ENCODE measurements at regions of chr17 and their contacts with region 1.

Region 1: DNA sequence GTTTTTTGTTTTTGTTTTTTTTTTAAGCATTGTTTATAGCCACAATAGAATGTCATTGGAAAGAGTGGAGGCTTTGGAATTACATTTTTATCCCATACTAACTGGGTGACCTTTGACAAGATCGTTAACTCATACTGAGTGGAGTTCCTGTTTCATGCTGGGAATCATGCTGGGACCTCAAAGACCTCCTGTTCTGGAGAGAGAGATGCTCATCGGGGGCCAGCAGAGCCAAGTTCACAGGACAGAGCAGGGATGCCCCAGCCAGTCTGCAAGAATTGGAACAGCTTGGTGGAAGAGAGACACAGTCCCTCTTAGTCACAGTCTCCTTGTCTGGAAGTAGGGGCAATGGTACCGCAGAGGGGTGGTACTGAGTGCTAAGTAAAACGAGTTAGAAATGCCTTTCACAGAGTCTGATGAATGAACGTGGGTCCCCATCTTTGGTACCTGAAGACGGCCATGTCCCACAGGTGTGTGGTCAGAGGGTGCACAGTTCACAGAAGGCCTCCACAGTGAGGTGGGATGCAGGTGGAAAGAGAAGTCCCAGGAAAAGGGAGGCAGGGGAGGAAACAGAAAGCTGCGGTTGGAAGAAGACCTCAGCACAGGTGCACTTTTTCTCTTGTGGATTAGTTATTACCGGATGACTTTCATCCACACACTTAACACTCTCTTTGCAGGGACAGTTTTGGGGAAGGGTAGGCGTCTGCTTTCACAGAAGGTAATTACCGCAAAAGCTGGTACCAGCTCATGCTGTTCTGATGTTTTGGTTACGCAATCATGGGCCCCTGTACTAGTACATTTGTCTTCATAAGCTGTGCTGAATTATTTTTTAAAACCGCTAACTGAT is 147.8 kb downstream of the PRKCA start:
- DNase-seq: no peak
- H3K4me3 ChIP-seq: no peak overlapping the region
- H3K27ac ChIP-seq: peak overlapping the region in 1 of 2 experiments; percentile 24; a peak in 2 of 4 replicates
- H3K4me1 ChIP-seq: peaks cover 14 to 28% of the 10 kb centered on the region in 2 experiments; a peak in 3 of 4 replicates
- H3K27me3 ChIP-seq: no peaks in the 10 kb centered on the region
- CTCF ChIP-seq: no peak
- EP300 ChIP-seq: no peak
- RAD21 ChIP-seq: no peak

Region 2: DNA sequence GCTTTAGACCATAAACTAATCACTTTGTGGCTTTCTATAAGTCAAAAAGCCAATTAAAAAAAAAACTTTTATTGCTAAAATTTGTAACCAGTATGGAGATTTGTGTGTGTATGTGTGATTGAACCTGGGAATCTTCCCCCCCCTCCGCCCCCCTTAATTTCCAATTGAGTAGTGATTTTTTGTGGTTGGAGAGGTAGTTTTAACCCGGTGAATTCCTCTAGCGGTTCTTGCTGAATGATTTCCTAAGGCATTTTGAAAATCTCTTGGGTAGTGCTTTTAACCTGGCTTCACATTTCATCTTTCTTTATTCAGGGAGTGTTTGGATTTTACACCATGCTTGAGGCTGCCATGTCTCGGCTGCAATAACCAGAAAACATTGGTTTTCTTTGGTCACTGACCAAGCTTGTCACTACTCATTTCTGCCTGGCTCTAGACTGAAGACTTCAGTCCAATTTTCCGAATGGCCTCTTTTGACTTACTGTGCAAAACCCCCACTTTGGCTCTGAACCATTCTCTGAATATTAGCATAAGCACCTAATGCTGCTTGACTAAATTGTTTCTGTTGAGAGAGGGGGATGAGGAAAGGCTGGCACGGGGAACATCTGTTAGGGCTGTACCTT is 112.3 kb before region 1 on chr17:
- CTCF ChIA-PET with region 1: no interaction called
- POLR2A ChIA-PET with region 1: no interaction called
- DNase-seq: no peak
- H3K4me3 ChIP-seq: no peak overlapping the region
- H3K27ac ChIP-seq: 0 out of 4 replicates have a peak overlapping the region, but pooled peaks of 1 of the 2 experiments have one; percentile 1
- H3K4me1 ChIP-seq: peaks cover 10 to 34% of the 10 kb centered on the region in 2 experiments
- H3K27me3 ChIP-seq: no peaks in the 10 kb centered on the region
- CTCF ChIP-seq: no peak
- EP300 ChIP-seq: no peak
- RAD21 ChIP-seq: no peak

Region 3: GRCh38 chr17:66431910-66432683 is 18.1 kb before region 1 on chr17:
- CTCF ChIA-PET with region 1: interaction called, 14 read pairs
- POLR2A ChIA-PET with region 1: interaction called, 5 read pairs
- DNase-seq: no peak
- H3K4me3 ChIP-seq: peak overlapping the region; percentile 32 to 52; a peak in 3 of 4 replicates
- H3K27ac ChIP-seq: peak overlapping the region; percentile 88 to 91
- H3K4me1 ChIP-seq: peaks cover 41 to 43% of the 10 kb centered on the region in 2 experiments
- H3K27me3 ChIP-seq: no peaks in the 10 kb centered on the region
- CTCF ChIP-seq: no peak
- EP300 ChIP-seq: peak; percentile 11 to 79; a peak in 1 of 4 replicates
- RAD21 ChIP-seq: no peak

Region 4: GRCh38 chr17:66437476-66438026 is 12.7 kb before region 1 on chr17:
- CTCF ChIA-PET with region 1: interaction called, 14 read pairs
- POLR2A ChIA-PET with region 1: interaction called, 5 read pairs
- DNase-seq: no peak
- H3K4me3 ChIP-seq: no peak overlapping the region
- H3K27ac ChIP-seq: no peak overlapping the region
- H3K4me1 ChIP-seq: peaks cover 14 to 21% of the 10 kb centered on the region in 2 experiments
- H3K27me3 ChIP-seq: no peaks in the 10 kb centered on the region
- CTCF ChIP-seq: no peak
- EP300 ChIP-seq: no peak
- RAD21 ChIP-seq: no peak